ENCODE measurements at regions of chr1 and their contacts with region 1.

Region 1: DNA sequence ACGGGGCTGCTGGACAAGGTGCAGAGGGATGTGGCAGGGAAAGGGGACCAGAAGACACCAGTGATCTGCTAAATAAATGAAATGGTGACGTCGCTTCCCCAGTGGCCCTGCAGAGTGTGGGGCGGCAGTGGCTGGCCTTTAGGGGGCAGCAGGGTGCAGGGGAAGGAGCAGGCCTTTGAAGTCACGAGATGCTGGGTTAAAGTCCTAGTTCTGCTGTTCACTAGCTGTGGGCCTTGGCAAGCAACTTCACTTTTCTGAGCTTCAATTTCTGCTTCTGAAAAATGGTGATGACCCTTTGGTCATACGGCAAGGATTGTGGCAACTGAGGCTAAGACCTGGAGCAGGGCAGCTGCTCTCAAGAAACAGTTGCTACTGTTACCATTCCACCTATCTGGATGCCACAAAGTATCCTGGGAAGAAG is 9.2 kb upstream of the GALE start:
- DNase-seq: peak; percentile 74
- H3K4me3 ChIP-seq: no peak overlapping the region
- H3K27ac ChIP-seq: no peak overlapping the region
- H3K4me1 ChIP-seq: no peaks in the 10 kb centered on the region
- H3K27me3 ChIP-seq: no peaks in the 10 kb centered on the region
- CTCF ChIP-seq: peak; percentile 88 to 91
- POLR2A ChIP-seq: no peak

Region 2: DNA sequence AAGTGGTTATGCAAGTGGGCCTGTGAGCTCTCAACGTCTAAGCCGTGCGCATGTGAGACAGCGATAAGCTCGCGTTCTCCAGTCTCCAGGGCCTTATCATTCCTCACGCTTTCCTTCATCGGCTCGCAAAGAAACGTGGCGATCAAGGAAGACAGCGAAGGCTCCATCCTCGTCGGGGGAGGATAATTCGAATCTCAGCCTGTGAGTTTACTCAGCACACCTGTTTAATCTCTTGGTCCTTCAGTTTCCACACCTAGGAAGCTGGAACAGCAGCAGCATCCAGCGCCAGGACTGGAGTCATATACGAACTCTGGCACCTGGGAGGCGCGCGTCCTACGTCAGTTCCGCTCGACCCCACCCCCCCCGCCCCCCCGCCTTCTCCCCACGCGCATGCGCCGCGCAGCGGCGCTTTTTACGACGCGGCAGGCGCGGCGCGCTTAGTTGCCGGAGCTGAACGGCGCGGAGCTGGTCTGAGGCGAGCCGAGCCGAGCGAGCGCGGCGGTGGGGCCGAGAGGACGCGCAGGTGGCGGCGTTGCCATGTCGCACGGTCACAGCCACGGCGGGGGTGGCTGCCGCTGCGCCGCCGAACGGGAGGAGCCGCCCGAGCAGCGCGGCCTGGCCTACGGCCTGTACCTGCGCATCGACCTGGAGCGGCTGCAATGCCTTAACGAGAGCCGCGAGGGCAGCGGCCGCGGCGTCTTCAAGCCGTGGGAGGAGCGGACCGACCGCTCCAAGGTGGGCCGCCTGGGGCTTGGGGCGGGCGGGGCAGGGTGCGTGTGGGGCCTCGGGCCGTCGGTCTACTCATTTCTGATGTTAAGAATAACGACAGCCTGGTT is 31.6 kb before region 1 on chr1 and contains the start of gene PITHD1:
- CTCF ChIA-PET with region 1: interaction called, 10 read pairs
- POLR2A ChIA-PET with region 1: no interaction called
- dilution Hi-C with region 1: no loop called
- intact Hi-C with region 1: no loop called
- DNase-seq: peak; percentile 86
- H3K4me3 ChIP-seq: peak within 1 kb of the TSS; percentile 43 to 81 (median 68)
- H3K27ac ChIP-seq: peak within 1 kb of the TSS; percentile 75
- H3K4me1 ChIP-seq: peaks cover 24% of the 10 kb centered on the region
- H3K27me3 ChIP-seq: no peaks in the 10 kb centered on the region
- CTCF ChIP-seq: no peak
- POLR2A ChIP-seq: peak; percentile 80
- total RNA-seq, gene PITHD1: 35.8 and 42.5 TPM in 2 replicates

Region 3: DNA sequence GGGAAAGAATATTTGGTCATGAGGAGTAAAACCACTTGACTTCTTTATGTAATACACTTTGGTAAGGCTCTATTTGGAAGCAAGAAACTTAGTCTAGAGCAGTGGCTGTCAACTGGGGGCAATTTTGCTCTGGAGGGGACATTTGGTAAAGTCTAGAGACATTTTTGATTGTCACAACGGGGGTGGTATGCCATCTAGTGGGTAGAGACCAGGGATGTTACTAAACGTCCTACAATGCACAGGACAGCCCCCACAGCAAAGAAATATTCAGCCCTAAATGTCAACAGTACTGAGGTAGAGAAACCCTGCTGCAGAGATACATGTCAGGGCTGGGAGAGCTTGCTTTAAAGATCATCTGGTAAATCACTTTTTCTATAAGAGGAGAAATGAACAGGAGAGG is 44.8 kb after region 1 on chr1:
- CTCF ChIA-PET with region 1: interaction called, 12 read pairs
- POLR2A ChIA-PET with region 1: no interaction called
- dilution Hi-C with region 1: no loop called
- intact Hi-C with region 1: loop called (anchors 1 kb)
- DNase-seq: peak; percentile 16
- H3K4me3 ChIP-seq: no peak overlapping the region
- H3K27ac ChIP-seq: no peak overlapping the region
- H3K4me1 ChIP-seq: no peaks in the 10 kb centered on the region
- H3K27me3 ChIP-seq: no peaks in the 10 kb centered on the region
- CTCF ChIP-seq: peak; percentile 19 to 31
- POLR2A ChIP-seq: no peak

Region 4: DNA sequence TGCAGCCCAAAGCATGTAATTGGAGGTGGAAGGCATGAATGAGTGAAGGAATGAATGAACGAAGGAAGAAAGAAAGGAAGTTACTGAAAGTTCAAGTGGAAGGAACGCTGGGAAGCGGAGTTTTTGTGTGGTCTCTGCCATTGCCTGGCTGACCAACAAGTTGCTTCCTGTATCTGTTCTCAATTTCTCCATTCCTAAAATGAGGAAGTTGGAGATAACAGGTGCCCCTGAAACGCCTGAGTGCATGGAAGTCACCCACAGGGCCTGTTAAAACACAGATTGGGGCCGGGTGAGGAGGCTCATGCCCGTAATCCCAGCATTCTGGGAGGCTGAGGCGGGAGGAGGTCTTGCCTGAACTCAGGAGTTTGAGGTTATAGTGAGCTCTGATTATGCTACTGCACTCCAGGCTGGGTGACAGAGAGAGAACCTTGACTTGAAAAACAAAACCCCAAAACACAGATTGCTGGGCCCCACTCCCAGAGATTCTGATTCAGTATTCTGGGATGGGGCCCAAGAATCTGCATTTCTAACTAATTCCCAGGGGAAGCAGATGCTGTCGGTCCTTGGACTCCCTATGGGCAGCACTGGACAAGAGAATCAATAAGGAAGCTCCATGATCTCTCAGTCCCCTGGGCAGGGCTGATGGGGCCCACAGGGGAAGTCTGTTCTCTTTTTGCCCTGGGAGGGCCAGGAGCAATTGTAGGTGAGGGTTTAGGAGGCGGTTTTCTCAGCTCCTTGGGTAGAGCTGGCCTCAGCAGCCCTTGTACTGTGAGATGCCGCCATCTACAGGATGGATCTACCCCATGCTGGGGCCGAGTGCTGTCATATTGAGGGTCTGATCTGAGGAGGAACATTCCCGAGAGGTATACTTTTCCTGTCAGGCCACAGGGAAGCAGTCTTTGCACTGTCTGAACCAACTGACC is 106.7 kb after region 1 on chr1:
- CTCF ChIA-PET with region 1: interaction called, 26 read pairs
- POLR2A ChIA-PET with region 1: no interaction called
- dilution Hi-C with region 1: no loop called
- intact Hi-C with region 1: loop called (anchors 1 kb)
- DNase-seq: peak; percentile 44
- H3K4me3 ChIP-seq: no peak overlapping the region
- H3K27ac ChIP-seq: no peak overlapping the region
- H3K4me1 ChIP-seq: no peaks in the 10 kb centered on the region
- H3K27me3 ChIP-seq: no peaks in the 10 kb centered on the region
- CTCF ChIP-seq: peak; percentile 26 to 46
- POLR2A ChIP-seq: no peak

Region 5: DNA sequence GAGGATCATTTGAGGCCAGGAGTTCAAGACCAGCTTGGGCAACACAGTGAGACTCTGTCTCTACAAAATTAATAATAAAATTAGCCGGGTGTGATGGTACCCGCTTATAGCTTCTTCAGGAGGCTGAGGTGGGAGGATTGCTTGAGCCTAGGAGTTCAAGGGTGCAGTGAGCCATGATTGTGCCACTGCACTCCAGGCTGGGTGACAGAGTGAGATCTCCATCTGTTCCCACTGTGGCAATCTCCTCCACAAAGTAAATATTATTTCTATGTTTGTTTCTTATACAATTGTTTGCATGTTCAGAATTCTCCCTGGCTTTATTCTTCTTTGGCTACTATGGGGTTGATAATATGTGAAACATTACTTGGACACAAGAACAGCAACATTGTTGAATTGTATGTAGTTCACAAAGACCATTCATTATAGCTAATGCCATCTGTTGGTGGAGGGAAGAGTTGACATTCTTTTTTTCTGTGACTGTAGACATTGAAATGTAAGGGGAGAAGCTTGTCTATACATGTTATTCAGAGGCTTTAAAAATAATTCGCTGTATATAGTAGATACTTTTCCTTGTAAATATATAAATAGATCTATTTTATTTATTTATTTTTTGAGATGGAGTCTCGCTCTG is 218.2 kb after region 1 on chr1:
- CTCF ChIA-PET with region 1: interaction called, 20 read pairs
- POLR2A ChIA-PET with region 1: no interaction called
- dilution Hi-C with region 1: no loop called
- intact Hi-C with region 1: loop called (anchors 5 kb)
- DNase-seq: peak; percentile 70
- H3K4me3 ChIP-seq: no peak overlapping the region
- H3K27ac ChIP-seq: no peak overlapping the region
- H3K4me1 ChIP-seq: no peaks in the 10 kb centered on the region
- H3K27me3 ChIP-seq: no peaks in the 10 kb centered on the region
- CTCF ChIP-seq: peak; percentile 37 to 45
- POLR2A ChIP-seq: no peak